ENCODE measurements at regions of chr6 and their contacts with region 1.

Region 1: GRCh38 chr6:10276106-10276505 is 138.8 kb downstream of the TFAP2A start:
- DNase-seq: no peak
- H3K4me3 ChIP-seq: no peak overlapping the region
- H3K27ac ChIP-seq: no peak overlapping the region
- H3K27me3 ChIP-seq: no peaks in the 10 kb centered on the region
- CTCF ChIP-seq: no peak

Region 2: DNA sequence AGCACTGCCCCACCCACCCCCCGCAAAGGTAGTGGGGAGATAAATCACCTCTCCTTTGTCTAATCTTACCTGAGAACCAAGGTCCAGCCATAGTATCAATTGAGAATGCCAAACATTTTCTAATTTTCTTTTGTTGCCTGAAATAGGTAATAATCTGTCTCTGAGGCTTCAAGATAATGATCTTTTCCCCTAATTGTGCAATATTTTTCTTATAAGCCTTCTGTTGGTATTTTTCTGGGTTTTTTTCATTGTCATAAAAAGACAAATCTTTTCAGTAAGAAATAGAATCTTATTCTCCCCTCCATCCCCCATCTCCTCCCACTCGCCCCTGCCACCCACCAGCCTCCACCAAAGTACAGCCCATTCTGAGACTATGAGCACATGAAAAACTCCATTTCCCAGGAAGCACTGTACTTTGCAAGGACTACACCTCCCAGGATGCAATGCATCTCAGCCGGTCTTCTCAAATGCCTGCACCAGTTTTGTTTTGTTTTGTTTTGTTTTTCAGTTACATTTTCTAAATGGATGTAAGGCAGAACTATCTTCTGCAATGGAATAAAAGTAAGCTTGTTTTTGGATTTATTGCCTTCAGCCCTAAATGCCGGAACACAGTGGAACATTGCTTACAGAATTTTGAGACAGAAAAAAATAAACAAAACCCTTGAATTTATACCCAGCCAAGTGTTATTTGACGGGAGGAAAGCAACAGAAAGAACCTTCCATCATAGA is 129.2 kb before region 1 on chr6:
- intact Hi-C with region 1: no loop called
- DNase-seq: peak in 6 of 10 donors; percentile 4 to 73 (median 41)
- H3K4me3 ChIP-seq: peak overlapping the region in 57 of 59 donors; percentile 16 to 73 (median 52)
- H3K27ac ChIP-seq: peak overlapping the region in 57 of 59 donors; percentile 8 to 95 (median 80)
- H3K27me3 ChIP-seq: peaks cover 0 to 5% (median 0%) of the 10 kb centered on the region in 45 donors
- CTCF ChIP-seq: peak in 6 of 56 donors; percentile 8 to 28 (median 14)

Region 3: GRCh38 chr6:10248378-10248891 is 27.7 kb before region 1 on chr6:
- intact Hi-C with region 1: loop called in 1 of 2 experiments (anchors 5 kb)
- DNase-seq: no peak
- H3K4me3 ChIP-seq: no peak overlapping the region
- H3K27ac ChIP-seq: no peak overlapping the region
- H3K27me3 ChIP-seq: peaks cover 0 to 4% (median 0%) of the 10 kb centered on the region in 45 donors
- CTCF ChIP-seq: no peak

Region 4: DNA sequence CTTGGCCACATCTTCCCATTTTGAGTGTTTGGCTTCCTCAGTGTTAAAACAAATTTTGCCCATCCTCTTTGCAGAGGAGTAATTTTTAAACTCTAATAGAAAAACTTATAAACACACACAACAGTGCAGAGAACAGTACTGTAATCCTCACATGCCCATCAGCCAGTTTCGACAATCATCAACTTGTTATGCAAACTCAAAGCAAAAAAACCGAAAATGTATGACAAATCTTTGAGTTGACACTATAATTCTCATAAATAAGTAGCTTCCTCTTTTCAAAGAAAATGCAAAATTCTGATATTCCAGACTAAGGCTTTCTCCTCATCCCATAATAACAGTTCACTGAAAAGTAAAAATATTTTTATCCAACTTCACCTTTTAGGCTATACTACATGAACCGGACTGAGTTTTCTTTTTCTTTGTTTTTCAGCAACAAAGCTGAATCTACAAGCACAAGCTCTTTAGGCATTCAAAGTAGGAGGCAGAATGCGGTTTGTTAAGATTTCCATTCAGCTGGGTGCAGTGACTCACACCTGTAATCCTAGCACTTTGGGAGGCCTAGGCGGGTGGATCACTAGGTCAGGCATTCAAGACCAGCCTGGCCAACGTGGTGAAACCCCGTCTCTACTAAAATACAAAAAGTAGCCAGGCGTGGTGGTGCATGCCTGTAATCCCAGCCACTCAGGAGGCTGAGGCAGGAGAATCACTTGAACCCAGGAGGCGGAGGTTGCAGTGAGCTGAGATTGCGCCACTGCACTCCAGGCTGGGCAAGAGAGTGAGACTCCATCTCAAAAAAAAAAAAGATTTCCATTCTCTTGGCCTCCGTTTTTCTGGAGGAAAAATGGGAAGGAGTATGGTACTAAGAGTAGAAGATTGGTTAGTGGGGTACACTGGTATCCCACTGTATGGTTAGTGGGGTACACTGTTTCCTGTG is 319.9 kb after region 1 on chr6:
- intact Hi-C with region 1: no loop called
- DNase-seq: no peak
- H3K4me3 ChIP-seq: no peak overlapping the region
- H3K27ac ChIP-seq: no peak overlapping the region
- H3K27me3 ChIP-seq: peaks cover 0 to 17% (median 0%) of the 10 kb centered on the region in 45 donors
- CTCF ChIP-seq: no peak

Measured in dorsolateral prefrontal cortex (tissue), 120 donors.